CD8-positive, alpha-beta T cell (primary cell): ENCODE measurements at regions of chr1 and their contacts with region 1.

Region 1: DNA sequence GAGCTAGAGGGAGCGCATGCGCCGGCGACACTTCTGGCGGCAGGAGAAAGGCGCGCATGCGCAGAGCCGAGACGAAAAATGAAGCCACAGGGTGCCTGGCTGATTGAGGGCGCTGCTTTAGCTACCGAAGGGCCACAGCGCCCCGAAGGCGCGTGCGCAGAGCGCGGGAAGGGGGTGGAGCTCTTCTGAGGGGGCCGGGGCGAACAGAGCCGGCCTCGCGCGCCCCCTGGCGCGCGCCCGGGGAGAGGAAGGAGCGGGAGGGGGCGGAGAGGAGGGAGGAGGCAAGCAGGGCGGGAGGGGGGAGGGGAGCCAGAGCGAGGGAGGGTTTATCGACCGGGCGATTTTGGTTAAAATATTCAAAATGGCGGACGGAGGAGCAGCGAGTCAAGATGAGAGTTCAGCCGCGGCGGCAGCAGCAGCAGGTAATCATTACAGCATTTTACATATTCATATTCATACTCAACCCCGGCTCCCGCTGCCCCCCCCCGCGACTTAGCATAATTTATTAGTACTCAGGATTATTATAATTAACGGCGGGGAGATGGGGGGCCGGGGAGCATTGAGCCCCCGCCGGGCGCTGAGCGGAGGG is at the start of gene POU2F1:
- DNase-seq: peak; percentile 97 to 100 (median 99)
- ATAC-seq: peak; percentile 78
- H3K4me3 ChIP-seq: peak within 1 kb of the TSS; percentile 89 to 96
- H3K4me3 Mint-ChIP-seq: peak within 1 kb of the TSS; percentile 97
- H3K27ac ChIP-seq: peak within 1 kb of the TSS; percentile 80 to 91
- H3K27ac Mint-ChIP-seq: peak within 1 kb of the TSS; percentile 96
- H3K4me1 ChIP-seq: peaks cover 23% of the 10 kb centered on the region
- H3K4me1 Mint-ChIP-seq: peaks cover 40% of the 10 kb centered on the region
- H3K27me3 ChIP-seq: no peaks in the 10 kb centered on the region
- H3K27me3 Mint-ChIP-seq: no peaks in the 10 kb centered on the region
- CTCF ChIP-seq: peak; percentile 45
- total RNA-seq, gene POU2F1: 18.5 to 23.9 TPM

Region 2: DNA sequence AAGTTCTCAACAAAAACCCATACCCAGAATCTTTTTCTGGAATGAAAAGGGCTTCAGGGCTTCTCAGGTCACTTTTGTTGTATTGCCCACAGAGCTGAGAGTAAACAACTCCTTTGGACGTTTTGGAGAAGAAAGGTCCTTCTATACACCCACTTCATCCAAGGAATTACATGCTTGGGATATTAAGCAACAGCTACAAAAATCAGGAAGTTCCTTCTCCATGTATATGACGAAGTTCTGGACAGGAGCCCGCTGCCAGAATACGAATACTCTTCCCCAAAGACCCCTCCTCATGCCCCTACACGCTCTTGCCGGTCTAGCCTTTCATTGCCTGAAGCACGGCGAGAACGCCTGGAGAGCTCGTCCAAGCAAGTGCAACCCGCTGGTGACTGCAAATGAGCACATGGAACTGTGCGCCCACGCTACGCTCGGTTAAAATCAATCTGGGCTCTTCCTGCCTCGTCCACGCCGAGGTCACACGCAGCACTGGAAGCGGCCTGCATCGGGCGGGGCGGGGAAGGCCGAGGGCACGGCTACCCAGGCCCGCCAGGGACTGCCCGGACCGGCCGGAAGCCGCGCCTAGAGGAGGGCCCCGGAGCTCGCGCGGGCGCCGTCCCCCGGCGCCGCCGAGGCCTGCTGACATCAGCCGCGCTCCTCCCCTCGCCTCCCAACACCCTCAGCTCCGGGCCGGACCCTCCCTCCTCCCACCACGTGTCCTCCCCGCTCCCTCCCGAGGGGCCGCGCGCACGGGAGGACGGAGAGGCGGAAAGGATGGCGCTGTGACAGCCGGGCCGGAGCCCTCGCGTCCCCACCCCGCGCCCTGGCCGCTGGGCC is 381.6 kb before region 1 on chr1 and contains the start of gene POGK:
- CTCF ChIA-PET with region 1: no interaction called
- POLR2A ChIA-PET with region 1: interaction called, 6 read pairs
- intact Hi-C with region 1: loop called in 1 of 2 experiments (anchors 2 kb)
- DNase-seq: peak; percentile 56 to 92 (median 80)
- ATAC-seq: peak; percentile 88
- H3K4me3 ChIP-seq: peak within 1 kb of the TSS; percentile 68 to 72
- H3K4me3 Mint-ChIP-seq: peak within 1 kb of the TSS; percentile 92
- H3K27ac ChIP-seq: peak within 1 kb of the TSS; percentile 71 to 75
- H3K27ac Mint-ChIP-seq: peak within 1 kb of the TSS; percentile 98
- H3K4me1 ChIP-seq: peaks cover 28% of the 10 kb centered on the region
- H3K4me1 Mint-ChIP-seq: peaks cover 41% of the 10 kb centered on the region
- H3K27me3 ChIP-seq: no peaks in the 10 kb centered on the region
- H3K27me3 Mint-ChIP-seq: no peaks in the 10 kb centered on the region
- CTCF ChIP-seq: no peak
- total RNA-seq, gene POGK: 14.9 to 16.1 TPM

Region 3: GRCh38 chr1:167066333-167067122 is 154.1 kb before region 1 on chr1:
- CTCF ChIA-PET with region 1: interaction called, 9 read pairs
- POLR2A ChIA-PET with region 1: interaction called, 3 read pairs
- intact Hi-C with region 1: loop called (anchors 1 to 2 kb)
- DNase-seq: peak; percentile 59 to 92 (median 80)
- ATAC-seq: peak; percentile 99
- H3K4me3 ChIP-seq: peak overlapping the region in 1 of 2 experiments; percentile 27
- H3K4me3 Mint-ChIP-seq: no peak overlapping the region
- H3K27ac ChIP-seq: no peak overlapping the region
- H3K27ac Mint-ChIP-seq: no peak overlapping the region
- H3K4me1 ChIP-seq: no peaks in the 10 kb centered on the region
- H3K4me1 Mint-ChIP-seq: no peaks in the 10 kb centered on the region
- H3K27me3 ChIP-seq: no peaks in the 10 kb centered on the region
- H3K27me3 Mint-ChIP-seq: no peaks in the 10 kb centered on the region
- CTCF ChIP-seq: peak; percentile 96

Region 4: DNA sequence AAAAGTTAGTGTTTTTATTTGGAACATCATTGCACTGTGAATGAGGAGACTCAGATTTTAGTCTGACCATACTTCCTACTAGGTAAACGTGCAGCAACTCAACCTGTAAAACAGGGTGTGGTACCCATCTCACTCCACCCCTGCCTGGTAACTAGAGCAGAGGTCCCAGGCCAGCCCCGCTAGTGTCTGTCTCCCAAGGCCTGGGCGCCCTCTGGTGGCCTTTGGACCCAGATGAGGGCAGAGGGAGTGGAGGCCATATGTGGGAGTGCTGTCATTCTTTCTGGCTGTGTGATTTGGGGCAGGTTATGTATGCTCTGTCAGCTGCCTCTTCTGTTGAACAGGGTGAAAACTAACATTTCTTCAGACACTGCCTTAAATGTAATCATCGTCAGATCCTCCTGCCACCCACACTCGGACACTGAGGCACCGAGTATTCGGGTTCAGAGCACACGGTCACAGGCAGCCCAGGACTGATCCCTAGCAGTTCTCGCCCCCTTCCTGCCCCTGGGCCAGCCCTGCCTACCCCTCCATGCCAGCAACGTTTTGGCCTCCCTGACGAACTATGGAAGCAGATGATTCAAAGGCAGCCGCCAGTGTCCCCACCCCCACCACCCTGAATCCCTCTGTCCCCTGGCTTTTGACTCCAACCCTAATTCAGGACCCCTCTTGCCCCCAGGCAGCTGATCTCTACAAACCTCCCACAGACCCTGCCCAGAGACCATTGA is 221.7 kb after region 1 on chr1:
- CTCF ChIA-PET with region 1: interaction called, 3 read pairs
- POLR2A ChIA-PET with region 1: interaction called, 11 read pairs
- intact Hi-C with region 1: loop called (anchors 5 kb)
- DNase-seq: peak; percentile 78 to 91 (median 89)
- ATAC-seq: peak; percentile 80
- H3K4me3 ChIP-seq: no peak overlapping the region
- H3K4me3 Mint-ChIP-seq: no peak overlapping the region
- H3K27ac ChIP-seq: peak overlapping the region in 1 of 2 experiments; percentile 71
- H3K27ac Mint-ChIP-seq: peak overlapping the region; percentile 85
- H3K4me1 ChIP-seq: peaks cover 81% of the 10 kb centered on the region
- H3K4me1 Mint-ChIP-seq: peaks cover 91% of the 10 kb centered on the region
- H3K27me3 ChIP-seq: no peaks in the 10 kb centered on the region
- H3K27me3 Mint-ChIP-seq: no peaks in the 10 kb centered on the region
- CTCF ChIP-seq: peak; percentile 75

Region 5: DNA sequence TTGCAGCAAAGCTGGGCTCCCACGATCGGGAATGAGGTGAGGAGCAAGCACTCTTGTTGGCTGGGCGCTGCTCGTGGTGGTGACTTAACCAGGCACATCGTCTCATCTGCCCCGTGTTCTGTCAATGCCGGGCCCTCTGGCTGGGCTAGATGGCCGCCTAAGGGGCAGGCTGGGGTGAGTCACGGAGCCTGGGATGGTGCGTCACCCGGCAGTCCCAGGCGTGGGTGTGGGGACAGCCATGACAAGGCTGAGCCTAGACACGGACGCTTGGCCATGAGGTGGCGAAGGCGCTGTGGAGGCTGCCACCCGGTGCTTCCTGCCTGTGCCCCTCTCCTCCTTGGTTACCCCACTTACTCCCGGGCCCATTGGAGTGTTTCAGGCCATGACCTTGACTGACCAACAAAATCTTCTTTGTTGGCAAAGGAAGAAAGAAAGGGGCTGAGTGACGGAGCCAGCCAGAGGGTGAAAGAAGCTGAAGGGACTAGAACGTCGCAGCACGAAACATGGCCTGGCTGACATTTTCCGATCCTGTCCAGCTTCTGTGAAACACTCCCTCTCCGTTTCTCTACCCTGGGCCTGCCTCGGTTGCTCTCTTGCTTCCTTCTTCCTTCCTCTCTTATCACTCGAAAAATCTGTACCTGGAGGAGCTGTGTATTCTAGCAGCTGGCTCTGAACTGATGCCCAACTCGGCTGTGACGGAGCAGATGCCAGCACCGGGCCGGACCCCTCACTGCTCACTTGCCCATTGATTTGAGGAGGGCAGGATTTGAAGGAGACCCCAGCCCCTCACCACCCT is 297.1 kb after region 1 on chr1:
- CTCF ChIA-PET with region 1: interaction called, 3 read pairs
- POLR2A ChIA-PET with region 1: interaction called, 24 read pairs
- intact Hi-C with region 1: loop called (anchors 1 to 2 kb)
- DNase-seq: peak; percentile 56 to 92 (median 86)
- ATAC-seq: peak; percentile 75
- H3K4me3 ChIP-seq: peak overlapping the region; percentile 94 to 98
- H3K4me3 Mint-ChIP-seq: peak overlapping the region; percentile 99
- H3K27ac ChIP-seq: peak overlapping the region; percentile 94 to 95
- H3K27ac Mint-ChIP-seq: peak overlapping the region; percentile 100
- H3K4me1 ChIP-seq: peaks cover 40% of the 10 kb centered on the region
- H3K4me1 Mint-ChIP-seq: peaks cover 51% of the 10 kb centered on the region
- H3K27me3 ChIP-seq: no peaks in the 10 kb centered on the region
- H3K27me3 Mint-ChIP-seq: no peaks in the 10 kb centered on the region
- CTCF ChIP-seq: no peak

Region 6: DNA sequence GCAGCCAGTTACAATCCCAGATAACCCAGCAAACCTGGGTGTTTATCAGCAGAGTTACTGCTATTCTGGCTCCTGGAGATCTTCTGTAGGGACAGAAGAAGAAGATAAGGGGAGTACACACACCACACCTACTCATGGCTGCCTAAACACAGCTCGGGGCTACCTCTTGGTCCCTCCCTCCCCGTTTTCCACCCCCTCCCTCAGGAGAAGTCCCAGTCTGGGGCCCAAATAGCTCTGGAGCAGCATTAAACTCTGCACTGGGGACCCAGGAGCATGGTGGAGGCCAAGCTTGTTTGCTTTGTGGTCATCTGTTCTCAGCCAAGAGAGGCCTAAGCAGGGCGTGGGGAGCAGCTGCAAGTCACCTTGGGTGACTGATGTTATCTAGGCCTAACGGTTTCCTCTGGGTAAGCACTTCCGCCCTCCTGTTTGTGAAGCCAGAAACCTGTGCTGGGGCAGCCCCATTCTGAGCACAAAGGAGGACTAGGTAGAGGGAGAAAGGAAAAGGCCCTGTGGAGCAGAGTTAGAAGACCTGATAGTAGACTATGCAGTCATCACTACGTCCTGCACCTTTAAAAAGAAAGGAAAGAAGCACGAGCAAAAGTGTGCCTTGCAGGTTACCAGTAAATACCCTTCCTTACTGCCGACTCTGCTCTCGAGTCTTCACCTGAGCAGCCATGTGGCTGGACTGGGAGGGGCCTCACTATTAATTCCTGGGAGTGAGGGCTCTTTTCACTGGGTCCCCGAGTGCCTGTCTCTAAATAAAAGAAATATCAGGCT is 407.4 kb after region 1 on chr1:
- CTCF ChIA-PET with region 1: no interaction called
- POLR2A ChIA-PET with region 1: interaction called, 3 read pairs
- intact Hi-C with region 1: loop called in 1 of 2 experiments (anchors 5 kb)
- DNase-seq: peak; percentile 44 to 91 (median 73)
- ATAC-seq: peak; percentile 67
- H3K4me3 ChIP-seq: peak overlapping the region; percentile 28 to 96
- H3K4me3 Mint-ChIP-seq: peak overlapping the region; percentile 89
- H3K27ac ChIP-seq: peak overlapping the region; percentile 46 to 94
- H3K27ac Mint-ChIP-seq: peak overlapping the region; percentile 96
- H3K4me1 ChIP-seq: peaks cover 50% of the 10 kb centered on the region
- H3K4me1 Mint-ChIP-seq: peaks cover 63% of the 10 kb centered on the region
- H3K27me3 ChIP-seq: no peaks in the 10 kb centered on the region
- H3K27me3 Mint-ChIP-seq: no peaks in the 10 kb centered on the region
- CTCF ChIP-seq: no peak

Region 7: GRCh38 chr1:168178638-168179437 is 958.2 kb after region 1 on chr1 and contains the start of gene TIPRL:
- CTCF ChIA-PET with region 1: no interaction called
- POLR2A ChIA-PET with region 1: no interaction called
- intact Hi-C with region 1: loop called in 1 of 2 experiments (anchors 2 kb)
- DNase-seq: peak; percentile 84 to 97 (median 93)
- ATAC-seq: peak; percentile 86
- H3K4me3 ChIP-seq: peak within 1 kb of the TSS; percentile 98 to 100
- H3K4me3 Mint-ChIP-seq: no peak within 1 kb of the TSS
- H3K27ac ChIP-seq: peak within 1 kb of the TSS; percentile 95 to 97
- H3K27ac Mint-ChIP-seq: no peak within 1 kb of the TSS
- H3K4me1 ChIP-seq: peaks cover 15% of the 10 kb centered on the region
- H3K4me1 Mint-ChIP-seq: peaks cover 12% of the 10 kb centered on the region
- H3K27me3 ChIP-seq: no peaks in the 10 kb centered on the region
- H3K27me3 Mint-ChIP-seq: peaks cover 7% of the 10 kb centered on the region
- CTCF ChIP-seq: peak; percentile 49
- total RNA-seq, gene TIPRL: 15.0 to 18.3 TPM